Activated CD4-positive, alpha-beta memory T cell treated with anti-CD3 and anti-CD28 coated beads for 36 hours (primary cell): ENCODE measurements at regions of chr4 and their contacts with region 1.

Region 1: DNA sequence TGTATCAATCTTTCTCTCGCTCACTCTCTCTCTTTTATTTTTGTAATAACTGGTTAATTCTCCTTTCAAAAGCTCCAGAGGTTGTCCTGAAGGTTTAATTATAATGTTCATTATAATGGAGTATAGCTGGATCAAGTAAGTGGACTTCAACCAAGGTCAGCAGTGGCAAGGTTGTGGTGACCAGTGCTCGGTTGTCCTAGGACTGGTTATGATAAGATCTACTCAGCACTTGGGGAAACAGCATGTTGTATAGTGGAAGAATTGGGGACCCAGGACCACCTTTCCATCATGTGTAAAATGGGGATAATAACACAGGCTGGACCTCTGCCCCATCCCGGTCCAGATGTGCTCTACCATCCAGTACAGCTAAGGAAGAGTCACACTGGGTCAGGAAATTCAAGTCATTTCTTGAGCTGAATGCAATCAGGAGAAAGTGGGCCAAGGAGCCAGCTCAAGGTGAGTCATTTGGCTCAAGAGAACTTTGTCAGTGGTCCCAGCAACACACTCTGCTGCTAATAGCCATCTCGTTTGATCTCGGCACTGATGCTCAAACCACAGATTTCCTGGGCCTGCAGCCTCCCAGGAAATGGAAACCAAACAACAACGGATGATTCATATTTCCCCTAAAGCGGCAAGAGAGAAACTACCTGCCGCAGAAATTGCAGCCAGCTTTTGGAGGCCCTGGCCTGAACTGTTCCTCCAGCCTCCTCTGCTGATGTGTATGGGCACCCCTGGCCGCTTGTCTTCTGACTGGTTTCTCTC is 123.6 kb upstream of the RBPJ start:
- DNase-seq: peak; percentile 88
- H3K4me3 Mint-ChIP-seq: peak overlapping the region; percentile 55
- H3K27ac Mint-ChIP-seq: peak overlapping the region; percentile 86
- H3K4me1 Mint-ChIP-seq: peaks cover 71% of the 10 kb centered on the region
- H3K27me3 Mint-ChIP-seq: peaks cover 1% of the 10 kb centered on the region

Region 2: DNA sequence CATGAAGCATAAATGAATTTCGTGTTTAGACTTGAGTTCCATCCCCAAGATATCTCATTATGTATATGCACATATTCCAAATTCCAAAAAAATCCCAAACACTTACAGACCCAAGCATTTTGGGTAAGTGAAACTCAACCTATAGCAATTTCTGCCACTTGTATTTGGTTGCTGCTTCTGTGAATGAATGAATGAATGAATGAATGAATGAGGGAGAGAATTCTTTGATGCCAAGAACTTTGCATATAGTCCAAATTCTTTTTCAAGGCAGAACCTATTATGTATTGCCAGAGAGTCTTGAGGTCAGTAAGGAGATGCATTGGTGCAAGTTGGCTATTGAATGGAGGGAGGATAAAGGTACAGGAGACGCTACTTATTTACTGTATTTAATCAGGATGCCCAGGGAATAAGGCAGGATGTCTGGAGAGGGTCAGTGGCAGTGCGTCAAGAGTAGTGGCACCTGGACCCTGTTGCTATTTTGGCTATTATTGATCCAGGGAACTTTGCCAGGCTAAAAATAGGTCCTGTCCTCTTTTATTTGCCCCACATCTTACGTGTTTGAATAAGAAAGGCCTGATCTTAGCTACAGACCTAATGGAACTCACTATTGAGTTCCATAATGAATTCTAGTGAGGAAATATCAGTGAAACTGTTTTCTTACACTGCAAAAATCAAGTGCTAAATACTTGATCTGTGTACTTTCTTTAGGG is 786.2 kb before region 1 on chr4:
- CTCF ChIA-PET with region 1: no interaction called
- POLR2A ChIA-PET with region 1: no interaction called
- intact Hi-C with region 1: no loop called
- DNase-seq: no peak
- H3K4me3 Mint-ChIP-seq: no peak overlapping the region
- H3K27ac Mint-ChIP-seq: no peak overlapping the region
- H3K4me1 Mint-ChIP-seq: no peaks in the 10 kb centered on the region
- H3K27me3 Mint-ChIP-seq: no peaks in the 10 kb centered on the region

Region 3: GRCh38 chr4:25862411-25863346 is 334.5 kb before region 1 on chr4 and contains the start of gene SEL1L3:
- CTCF ChIA-PET with region 1: no interaction called
- POLR2A ChIA-PET with region 1: no interaction called
- intact Hi-C with region 1: loop called (anchors 10 kb)
- DNase-seq: peak; percentile 74
- H3K4me3 Mint-ChIP-seq: peak within 1 kb of the TSS; percentile 99
- H3K27ac Mint-ChIP-seq: peak within 1 kb of the TSS; percentile 100
- H3K4me1 Mint-ChIP-seq: peaks cover 40% of the 10 kb centered on the region
- H3K27me3 Mint-ChIP-seq: peaks cover 2% of the 10 kb centered on the region
- total RNA-seq, gene SEL1L3: 67.1 to 67.7 TPM

Region 4: DNA sequence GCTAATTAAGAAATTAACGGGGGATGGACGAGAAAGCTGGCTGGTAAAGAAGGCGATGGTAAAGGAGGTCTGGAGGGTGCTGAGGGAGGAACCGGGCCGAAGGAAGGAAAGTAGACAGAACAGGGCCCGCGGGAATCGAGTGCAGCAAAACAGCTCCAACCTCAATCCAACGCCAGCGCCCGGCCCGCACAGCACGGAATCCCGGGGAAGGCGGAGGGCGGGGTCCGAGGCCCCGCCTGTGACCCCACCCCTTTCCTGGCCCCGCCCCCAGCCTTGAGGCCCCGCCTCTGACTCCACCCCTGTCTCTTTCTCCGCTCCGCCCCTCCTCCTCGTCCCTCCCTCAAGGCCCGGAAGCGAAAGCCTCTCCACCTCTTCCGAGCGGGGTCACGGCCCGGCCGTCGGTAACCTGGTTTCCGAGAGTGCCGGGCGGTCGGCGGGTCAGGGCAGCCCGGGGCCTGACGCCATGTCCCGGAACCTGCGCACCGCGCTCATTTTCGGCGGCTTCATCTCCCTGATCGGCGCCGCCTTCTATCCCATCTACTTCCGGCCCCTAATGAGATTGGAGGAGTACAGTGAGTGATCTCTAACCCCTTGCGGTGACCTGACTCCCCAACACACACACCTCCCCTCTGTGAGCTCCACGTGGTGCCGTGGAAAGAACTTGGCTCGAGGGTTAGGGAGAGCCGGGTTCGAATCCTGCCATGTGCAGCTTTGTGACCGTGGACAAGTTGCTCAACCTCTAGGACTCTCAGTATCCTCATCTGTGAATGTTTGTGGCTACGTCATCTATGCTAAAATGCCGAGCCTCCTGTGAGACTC is 283.1 kb before region 1 on chr4 and contains the start of gene SMIM20:
- CTCF ChIA-PET with region 1: no interaction called
- POLR2A ChIA-PET with region 1: no interaction called
- intact Hi-C with region 1: no loop called
- DNase-seq: peak; percentile 93
- H3K4me3 Mint-ChIP-seq: peak within 1 kb of the TSS; percentile 87
- H3K27ac Mint-ChIP-seq: peak within 1 kb of the TSS; percentile 94
- H3K4me1 Mint-ChIP-seq: peaks cover 17% of the 10 kb centered on the region
- H3K27me3 Mint-ChIP-seq: no peaks in the 10 kb centered on the region
- total RNA-seq, gene SMIM20: 26.0 to 28.0 TPM

Region 5: GRCh38 chr4:26076000-26076587 is 121.1 kb before region 1 on chr4:
- CTCF ChIA-PET with region 1: interaction called, 37 read pairs
- POLR2A ChIA-PET with region 1: interaction called, 65 read pairs
- intact Hi-C with region 1: loop called (anchors 1 kb)
- DNase-seq: peak; percentile 81
- H3K4me3 Mint-ChIP-seq: peak overlapping the region; percentile 34
- H3K27ac Mint-ChIP-seq: peak overlapping the region; percentile 96
- H3K4me1 Mint-ChIP-seq: peaks cover 87% of the 10 kb centered on the region
- H3K27me3 Mint-ChIP-seq: no peaks in the 10 kb centered on the region

Region 6: DNA sequence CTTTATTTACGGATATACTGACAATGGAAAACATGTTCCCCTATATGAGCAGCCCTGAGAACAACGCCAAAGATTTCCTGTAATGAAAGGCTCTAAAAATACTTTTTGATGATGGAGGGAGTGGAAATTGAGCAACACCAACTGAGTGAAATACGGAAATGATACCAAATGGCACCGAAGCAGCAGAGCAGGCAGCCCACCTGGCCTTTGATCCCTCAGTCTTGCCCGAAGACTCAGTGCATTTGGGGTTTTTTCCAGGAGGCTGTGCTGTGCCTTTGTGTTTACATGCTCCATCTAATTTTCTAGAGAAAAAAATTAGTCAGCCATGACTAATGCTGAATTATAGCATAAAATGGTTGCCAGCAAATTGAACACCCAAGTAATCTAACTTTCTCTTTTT is 46.3 kb before region 1 on chr4:
- CTCF ChIA-PET with region 1: interaction called, 3 read pairs
- POLR2A ChIA-PET with region 1: no interaction called
- intact Hi-C with region 1: loop called (anchors 2 kb)
- DNase-seq: peak; percentile 79
- H3K4me3 Mint-ChIP-seq: no peak overlapping the region
- H3K27ac Mint-ChIP-seq: peak overlapping the region; percentile 87
- H3K4me1 Mint-ChIP-seq: peaks cover 47% of the 10 kb centered on the region
- H3K27me3 Mint-ChIP-seq: no peaks in the 10 kb centered on the region

Region 7: DNA sequence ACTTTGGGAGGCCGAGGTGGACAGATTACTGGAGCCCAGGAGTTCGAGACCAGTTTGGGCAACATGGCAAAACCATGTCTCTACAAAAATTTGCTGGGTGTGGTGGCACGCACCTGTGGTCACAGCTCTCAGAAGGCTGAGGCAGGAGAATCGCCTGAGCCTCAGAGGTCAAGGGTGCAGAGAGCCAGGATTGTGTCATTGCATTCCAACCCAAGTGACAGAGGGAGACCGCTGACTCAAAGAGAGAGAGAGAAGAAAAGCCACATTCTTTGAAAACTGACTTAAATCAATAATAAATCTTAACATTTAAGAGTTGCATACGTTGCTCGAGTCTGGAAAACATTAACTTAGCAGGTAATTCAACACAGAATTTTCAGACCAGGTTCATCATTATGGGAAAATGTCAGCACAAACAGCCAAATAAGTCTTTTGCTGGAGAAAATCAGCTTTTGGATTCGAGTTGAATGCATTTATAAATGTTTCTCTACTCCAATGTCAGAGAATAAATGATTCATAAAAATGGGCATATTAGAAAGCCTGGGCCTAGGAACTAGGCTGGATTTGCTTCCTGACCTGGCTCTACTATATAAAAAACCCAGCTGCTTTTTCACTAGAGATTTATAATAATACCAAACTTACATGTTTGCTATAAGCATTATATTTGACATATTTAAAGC is 55.3 kb after region 1 on chr4:
- CTCF ChIA-PET with region 1: no interaction called
- POLR2A ChIA-PET with region 1: no interaction called
- intact Hi-C with region 1: loop called (anchors 2 kb)
- DNase-seq: peak; percentile 50
- H3K4me3 Mint-ChIP-seq: no peak overlapping the region
- H3K27ac Mint-ChIP-seq: no peak overlapping the region
- H3K4me1 Mint-ChIP-seq: peaks cover 6% of the 10 kb centered on the region
- H3K27me3 Mint-ChIP-seq: no peaks in the 10 kb centered on the region

Region 8: GRCh38 chr4:26325191-26325590 is 128.0 kb after region 1 on chr4:
- CTCF ChIA-PET with region 1: interaction called, 15 read pairs
- POLR2A ChIA-PET with region 1: interaction called, 38 read pairs
- intact Hi-C with region 1: no loop called
- DNase-seq: no peak
- H3K4me3 Mint-ChIP-seq: peak overlapping the region; percentile 62
- H3K27ac Mint-ChIP-seq: peak overlapping the region; percentile 78
- H3K4me1 Mint-ChIP-seq: peaks cover 47% of the 10 kb centered on the region
- H3K27me3 Mint-ChIP-seq: no peaks in the 10 kb centered on the region